ENCODE measurements at regions of chr17 and their contacts with region 1.

Region 1: GRCh38 chr17:69390795-69391501 is 23.5 kb upstream of the MAP2K6 start:
- DNase-seq: no peak
- ATAC-seq: no peak
- H3K4me3 ChIP-seq: no peak overlapping the region
- H3K4me3 Mint-ChIP-seq: no peak overlapping the region
- H3K27ac ChIP-seq: no peak overlapping the region
- H3K27ac Mint-ChIP-seq: no peak overlapping the region
- H3K4me1 ChIP-seq: no peaks in the 10 kb centered on the region
- H3K4me1 Mint-ChIP-seq: no peaks in the 10 kb centered on the region
- H3K27me3 ChIP-seq: no peaks in the 10 kb centered on the region
- H3K27me3 Mint-ChIP-seq: peaks cover 19% of the 10 kb centered on the region
- CTCF ChIP-seq: no peak

Region 2: DNA sequence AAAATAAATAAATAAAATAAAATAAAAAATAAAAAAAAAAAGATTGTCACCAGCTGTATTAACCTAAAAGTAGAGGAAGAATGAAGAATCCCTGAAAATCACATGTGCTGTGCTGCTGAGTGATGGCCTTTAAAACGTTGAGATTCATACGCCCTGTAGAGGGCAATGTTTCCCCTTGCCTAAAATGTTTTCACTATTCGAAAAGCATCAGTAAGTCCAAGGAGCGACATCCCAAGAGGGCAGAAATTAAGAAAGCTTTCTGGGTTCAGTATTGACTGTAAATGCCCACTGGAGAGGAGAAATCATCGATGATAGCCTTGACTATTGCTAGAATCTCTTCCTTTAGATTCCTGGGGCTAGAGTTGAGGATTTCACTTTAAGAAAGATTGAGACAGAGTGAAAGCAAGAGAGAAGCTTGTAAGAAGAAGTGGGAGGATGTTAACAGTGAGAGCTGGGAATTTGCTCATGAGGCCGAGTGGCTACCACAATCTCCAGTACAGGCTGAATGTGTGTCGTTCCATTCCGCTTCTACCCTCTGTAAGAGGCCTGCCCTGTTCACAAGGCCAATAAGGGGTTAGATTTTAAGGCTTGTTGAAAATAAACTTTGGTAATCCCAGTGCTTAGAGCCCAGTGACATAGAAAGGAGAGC is 619.0 kb before region 1 on chr17:
- CTCF ChIA-PET with region 1: no interaction called
- POLR2A ChIA-PET with region 1: no interaction called
- intact Hi-C with region 1: loop called (anchors 10 kb)
- DNase-seq: peak in 3 of 14 experiments; percentile 20 to 50 (median 43)
- ATAC-seq: no peak
- H3K4me3 ChIP-seq: no peak overlapping the region
- H3K4me3 Mint-ChIP-seq: no peak overlapping the region
- H3K27ac ChIP-seq: no peak overlapping the region
- H3K27ac Mint-ChIP-seq: no peak overlapping the region
- H3K4me1 ChIP-seq: no peaks in the 10 kb centered on the region
- H3K4me1 Mint-ChIP-seq: no peaks in the 10 kb centered on the region
- H3K27me3 ChIP-seq: no peaks in the 10 kb centered on the region
- H3K27me3 Mint-ChIP-seq: no peaks in the 10 kb centered on the region
- CTCF ChIP-seq: peak; percentile 39

Region 3: DNA sequence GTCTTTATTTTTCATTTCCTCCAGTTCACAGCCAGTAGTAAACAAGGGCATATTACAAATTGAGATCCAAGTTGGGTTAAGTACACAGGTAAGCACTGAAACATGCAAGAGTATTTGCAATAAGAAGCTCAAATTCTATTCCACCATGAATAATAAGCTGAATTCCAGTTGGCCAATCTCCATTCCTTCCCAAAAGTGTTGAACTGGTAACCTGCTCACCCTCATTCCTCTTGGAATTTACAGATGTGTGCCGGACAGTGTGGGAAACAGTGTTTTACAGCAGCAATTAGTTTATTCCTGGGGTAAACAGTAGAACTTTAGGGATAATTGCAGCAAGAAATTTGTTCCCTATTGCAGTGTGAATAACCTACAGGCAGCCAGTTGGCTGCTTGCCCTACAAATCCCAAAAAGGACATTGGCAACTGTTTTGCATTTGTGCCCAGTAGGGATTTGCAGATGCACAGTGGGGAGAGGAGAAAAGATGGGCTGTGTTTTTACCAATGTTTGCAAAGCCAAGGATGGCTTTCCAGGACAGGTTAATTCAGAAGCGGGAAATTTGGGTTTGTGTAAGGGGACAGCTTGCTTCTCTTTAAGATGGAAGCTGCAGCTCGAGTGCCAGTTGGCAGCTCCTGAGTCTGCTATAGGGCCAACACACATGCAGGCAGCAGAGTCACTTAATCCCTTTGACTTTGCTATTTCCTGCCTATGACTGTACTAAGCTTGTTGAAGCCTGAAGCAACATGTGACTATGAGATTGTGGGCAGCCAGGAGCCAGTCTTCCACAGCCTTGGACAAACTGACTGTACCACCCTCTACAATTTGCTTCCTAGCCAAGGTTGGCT is 342.4 kb after region 1 on chr17:
- CTCF ChIA-PET with region 1: no interaction called
- POLR2A ChIA-PET with region 1: no interaction called
- intact Hi-C with region 1: no loop called
- DNase-seq: no peak
- ATAC-seq: no peak
- H3K4me3 ChIP-seq: no peak overlapping the region
- H3K4me3 Mint-ChIP-seq: no peak overlapping the region
- H3K27ac ChIP-seq: no peak overlapping the region
- H3K27ac Mint-ChIP-seq: no peak overlapping the region
- H3K4me1 ChIP-seq: no peaks in the 10 kb centered on the region
- H3K4me1 Mint-ChIP-seq: no peaks in the 10 kb centered on the region
- H3K27me3 ChIP-seq: no peaks in the 10 kb centered on the region
- H3K27me3 Mint-ChIP-seq: no peaks in the 10 kb centered on the region
- CTCF ChIP-seq: no peak

Measured in CD4-positive, alpha-beta T cell (primary cell).